ENCODE measurements at regions of chrX and their contacts with region 1.

Region 1: DNA sequence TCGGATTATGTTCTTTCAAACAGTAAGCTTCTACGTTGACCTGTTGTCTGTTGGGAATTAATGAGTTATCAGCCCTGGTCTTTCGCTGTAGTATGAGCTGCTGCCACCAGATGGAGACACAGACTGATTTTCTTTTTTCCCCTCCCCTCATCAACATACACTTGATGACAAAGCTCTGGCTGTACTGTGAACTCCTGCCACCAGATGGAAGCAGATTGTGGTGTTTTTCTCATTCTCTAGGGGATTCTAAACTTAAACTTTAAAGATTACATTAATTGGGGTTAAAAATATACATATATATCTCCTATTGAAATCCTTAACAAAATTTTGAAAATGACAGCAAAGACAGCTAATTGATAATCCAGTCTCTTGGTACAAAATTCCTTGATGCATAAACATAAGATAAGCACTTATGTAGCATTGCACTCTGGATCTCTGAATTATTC is 44.8 kb downstream of the SMS start:
- DNase-seq: peak; percentile 46
- H3K4me3 Mint-ChIP-seq: no peak overlapping the region
- H3K27ac Mint-ChIP-seq: no peak overlapping the region
- H3K4me1 Mint-ChIP-seq: peaks cover 15% of the 10 kb centered on the region
- H3K27me3 Mint-ChIP-seq: no peaks in the 10 kb centered on the region

Region 2: DNA sequence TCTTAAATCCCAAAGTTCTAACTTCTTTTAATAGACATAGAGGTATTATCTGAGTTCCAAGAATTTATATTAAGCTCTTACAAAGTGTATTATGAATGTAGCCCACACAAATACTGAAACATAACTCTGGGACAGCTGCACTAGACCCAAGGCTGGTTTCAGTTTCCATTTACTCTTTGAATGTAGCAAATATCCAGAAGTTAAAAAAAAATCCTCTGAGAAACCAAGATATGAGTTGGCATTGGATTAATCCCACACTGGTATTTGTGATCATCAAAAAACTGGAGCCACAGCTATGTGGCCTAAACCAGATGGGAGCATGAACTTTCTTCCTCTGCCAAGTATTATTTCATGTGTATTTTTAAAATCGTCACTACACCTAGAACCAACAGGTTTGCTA is 203.8 kb before region 1 on chrX:
- intact Hi-C with region 1: no loop called
- DNase-seq: no peak
- H3K4me3 Mint-ChIP-seq: no peak overlapping the region
- H3K27ac Mint-ChIP-seq: no peak overlapping the region
- H3K4me1 Mint-ChIP-seq: peaks cover 9% of the 10 kb centered on the region
- H3K27me3 Mint-ChIP-seq: peaks cover 3% of the 10 kb centered on the region

Region 3: GRCh38 chrX:22037911-22038537 is 52.7 kb after region 1 on chrX:
- intact Hi-C with region 1: loop called (anchors 5 kb)
- DNase-seq: no peak
- H3K4me3 Mint-ChIP-seq: peak overlapping the region; percentile 54
- H3K27ac Mint-ChIP-seq: peak overlapping the region; percentile 69
- H3K4me1 Mint-ChIP-seq: peaks cover 11% of the 10 kb centered on the region
- H3K27me3 Mint-ChIP-seq: no peaks in the 10 kb centered on the region

Region 4: DNA sequence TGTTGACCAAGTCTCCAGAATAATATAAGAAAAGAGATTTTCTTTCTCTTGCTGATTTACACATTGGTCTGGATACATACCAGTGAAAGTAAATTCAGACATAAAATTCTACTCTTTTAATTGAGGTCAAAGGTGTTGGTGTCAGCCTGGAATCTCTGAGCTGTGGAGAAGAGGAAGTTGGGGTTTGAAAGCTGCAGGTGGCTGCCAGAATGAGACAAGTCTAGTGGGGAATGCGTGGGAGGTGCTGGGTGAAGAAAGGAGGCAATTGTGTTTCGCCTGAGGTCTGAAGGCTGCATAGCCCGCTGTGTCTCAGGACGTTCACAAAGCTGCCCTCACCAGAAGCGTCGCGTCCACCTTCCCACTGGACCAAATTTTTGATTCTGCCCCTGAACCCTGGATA is 77.9 kb after region 1 on chrX:
- intact Hi-C with region 1: loop called (anchors 1 kb)
- DNase-seq: no peak
- H3K4me3 Mint-ChIP-seq: no peak overlapping the region
- H3K27ac Mint-ChIP-seq: peak overlapping the region; percentile 20
- H3K4me1 Mint-ChIP-seq: peaks cover 46% of the 10 kb centered on the region
- H3K27me3 Mint-ChIP-seq: no peaks in the 10 kb centered on the region

Region 5: GRCh38 chrX:22135994-22136684 is 150.8 kb after region 1 on chrX:
- intact Hi-C with region 1: loop called (anchors 1 kb)
- DNase-seq: no peak
- H3K4me3 Mint-ChIP-seq: no peak overlapping the region
- H3K27ac Mint-ChIP-seq: no peak overlapping the region
- H3K4me1 Mint-ChIP-seq: peaks cover 4% of the 10 kb centered on the region
- H3K27me3 Mint-ChIP-seq: no peaks in the 10 kb centered on the region

Region 6: GRCh38 chrX:22192417-22193060 is 207.2 kb after region 1 on chrX:
- intact Hi-C with region 1: loop called (anchors 1 kb)
- DNase-seq: peak; percentile 21
- H3K4me3 Mint-ChIP-seq: no peak overlapping the region
- H3K27ac Mint-ChIP-seq: no peak overlapping the region
- H3K4me1 Mint-ChIP-seq: peaks cover 8% of the 10 kb centered on the region
- H3K27me3 Mint-ChIP-seq: no peaks in the 10 kb centered on the region

Region 7: DNA sequence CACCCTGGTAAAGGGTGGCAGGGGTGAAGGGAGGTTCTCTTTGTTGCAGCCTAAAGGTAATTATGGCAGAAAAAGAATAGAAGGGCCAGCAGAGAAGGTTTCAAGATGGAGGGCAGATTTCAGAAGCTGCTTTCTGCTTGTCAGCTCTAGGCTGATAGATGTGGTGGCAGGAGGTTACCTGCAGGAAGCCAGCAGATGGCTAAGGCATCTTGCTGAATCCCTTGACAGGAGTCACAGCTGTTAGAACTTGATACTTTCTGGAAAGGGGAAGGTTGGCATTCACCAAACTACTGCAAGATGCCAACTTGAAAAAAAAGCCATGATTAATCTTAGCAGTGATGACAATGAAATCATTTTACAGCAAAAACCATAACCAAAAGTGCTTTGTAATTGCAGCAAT is 217.8 kb after region 1 on chrX:
- intact Hi-C with region 1: no loop called
- DNase-seq: no peak
- H3K4me3 Mint-ChIP-seq: no peak overlapping the region
- H3K27ac Mint-ChIP-seq: no peak overlapping the region
- H3K4me1 Mint-ChIP-seq: no peaks in the 10 kb centered on the region
- H3K27me3 Mint-ChIP-seq: no peaks in the 10 kb centered on the region

Region 8: DNA sequence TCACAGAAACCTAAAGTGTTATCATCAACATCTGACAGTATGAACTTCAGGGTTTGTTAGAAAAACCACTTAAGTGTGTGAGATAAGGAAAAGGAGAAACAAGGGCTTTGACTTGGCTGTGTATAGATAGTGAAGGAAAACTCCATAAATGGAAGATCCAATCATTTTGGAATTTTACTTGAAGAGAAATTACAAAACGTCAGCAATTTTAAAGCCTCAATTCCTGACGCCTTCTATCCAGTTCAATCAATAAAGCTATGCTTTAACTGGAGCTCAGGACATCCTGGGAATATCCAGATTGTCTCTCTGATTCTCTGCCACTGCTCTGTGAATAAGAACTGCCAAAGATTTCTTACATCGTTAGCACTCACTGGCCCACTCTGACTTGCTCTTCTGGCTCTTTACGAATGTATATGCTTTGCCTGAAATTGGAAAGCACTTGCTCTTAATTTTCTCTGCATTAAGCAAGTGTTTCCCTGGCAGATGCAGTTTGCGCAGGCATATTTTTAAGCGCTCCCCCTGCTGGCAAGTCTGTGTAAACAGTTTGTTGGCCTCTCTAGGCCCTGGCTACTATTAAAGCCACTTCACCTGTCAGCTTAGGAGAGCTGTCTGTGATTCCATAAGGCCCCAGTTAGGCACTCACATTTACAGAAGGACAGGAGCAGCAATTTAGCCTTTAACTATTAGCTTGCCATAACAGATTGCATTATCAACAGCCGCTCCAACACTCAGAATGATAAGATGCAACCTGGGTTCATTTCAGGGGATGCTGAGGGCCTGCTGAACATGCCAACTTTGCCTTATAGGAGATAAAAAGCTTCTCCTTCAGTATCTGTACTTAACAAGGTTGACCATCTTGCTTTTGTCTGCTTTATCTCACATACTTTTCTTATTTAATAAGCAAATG is 763.0 kb after region 1 on chrX:
- intact Hi-C with region 1: loop called (anchors 1 kb)
- DNase-seq: no peak
- H3K4me3 Mint-ChIP-seq: no peak overlapping the region
- H3K27ac Mint-ChIP-seq: no peak overlapping the region
- H3K4me1 Mint-ChIP-seq: no peaks in the 10 kb centered on the region
- H3K27me3 Mint-ChIP-seq: peaks cover 2% of the 10 kb centered on the region